ENCODE measurements at regions of chr10 and their contacts with region 1.

Region 1: DNA sequence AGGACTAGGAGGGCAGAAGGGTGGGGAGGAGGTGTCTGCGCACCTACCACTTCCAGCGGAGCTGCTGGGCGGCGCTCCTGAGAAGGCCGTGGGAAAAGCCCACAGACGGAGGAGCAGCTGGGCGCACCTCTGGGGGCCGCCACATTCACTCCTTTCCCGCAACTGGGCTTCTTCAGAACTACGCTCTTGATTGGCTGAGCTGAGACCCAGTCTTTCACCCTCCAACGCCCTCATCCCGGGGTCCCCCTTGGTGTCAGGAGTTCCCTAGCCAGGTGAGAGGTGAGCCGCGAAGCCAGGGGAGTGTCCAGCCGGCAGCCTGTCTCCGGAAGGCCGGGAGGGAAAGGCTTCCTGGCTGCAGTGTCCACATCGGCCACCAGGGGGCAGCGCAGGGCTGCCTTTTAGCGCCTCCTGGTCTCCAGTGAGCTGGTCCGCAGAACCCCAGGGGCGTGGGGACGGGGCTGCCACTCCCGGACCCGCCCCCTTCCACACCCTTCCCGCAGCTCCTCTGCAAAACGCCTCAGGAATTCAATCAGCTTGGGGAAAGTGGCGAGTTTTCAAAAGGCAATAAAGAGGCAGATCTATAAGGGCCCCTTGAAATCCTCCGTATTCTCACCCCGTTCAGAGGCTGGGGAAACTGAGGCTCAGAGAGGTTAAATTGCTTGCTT is 98.8 kb downstream of the CHST15 start:
- DNase-seq: peak; percentile 89 to 97 (median 93)
- H3K4me3 ChIP-seq: no peak overlapping the region
- H3K27ac ChIP-seq: no peak overlapping the region
- H3K4me1 ChIP-seq: peaks cover 6% of the 10 kb centered on the region
- H3K27me3 ChIP-seq: no peaks in the 10 kb centered on the region
- CTCF ChIP-seq: peak; percentile 99 to 100 (median 99)
- EP300 ChIP-seq: no peak
- POLR2A ChIP-seq: no peak

Region 2: GRCh38 chr10:123848564-123849457 is 145.7 kb before region 1 on chr10:
- intact Hi-C with region 1: no loop called
- DNase-seq: no peak
- H3K4me3 ChIP-seq: no peak overlapping the region
- H3K27ac ChIP-seq: no peak overlapping the region
- H3K4me1 ChIP-seq: no peaks in the 10 kb centered on the region
- H3K27me3 ChIP-seq: no peaks in the 10 kb centered on the region
- CTCF ChIP-seq: no peak
- EP300 ChIP-seq: no peak
- POLR2A ChIP-seq: no peak

Region 3: DNA sequence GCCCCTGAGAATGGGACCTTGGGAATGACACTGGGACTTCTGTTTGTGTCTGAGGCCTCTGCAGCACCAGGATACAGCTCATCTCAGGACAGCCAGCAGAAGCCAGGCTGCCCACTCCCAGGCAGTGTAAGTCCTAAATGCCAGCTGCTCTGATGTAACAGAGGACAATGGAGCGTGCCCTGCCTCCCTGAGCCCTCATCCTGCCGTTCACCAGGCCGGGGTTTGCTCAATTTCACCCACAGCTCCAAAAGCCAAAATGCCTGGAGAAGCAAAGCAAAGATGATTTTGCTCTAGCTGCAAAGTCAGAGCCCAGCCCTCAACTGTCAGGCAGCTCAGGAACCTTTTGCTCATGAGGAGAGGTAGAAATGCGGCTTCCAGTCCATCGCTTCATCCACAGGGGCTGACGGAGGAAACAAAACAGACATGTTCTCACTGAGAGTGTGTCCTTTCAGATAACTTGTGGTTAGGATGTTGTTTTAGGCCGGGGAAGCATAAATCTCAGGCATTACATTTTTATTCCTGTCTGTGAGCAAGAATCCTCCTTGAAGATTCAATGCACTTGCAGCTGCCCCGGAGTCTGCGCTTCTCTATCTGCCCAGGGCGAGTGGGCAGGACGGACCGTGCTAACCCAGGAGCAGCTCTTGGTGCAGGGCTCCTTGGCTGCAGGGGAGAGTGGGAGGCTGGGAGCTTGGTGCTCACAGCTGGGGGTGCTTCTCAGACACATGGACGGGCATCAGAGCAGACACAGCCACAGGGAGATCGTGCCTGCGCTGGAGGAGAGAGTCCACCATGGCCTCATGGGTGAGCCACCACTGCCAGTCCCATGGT is 182.0 kb after region 1 on chr10:
- intact Hi-C with region 1: loop called in 1 of 4 experiments (anchors 10 kb)
- DNase-seq: peak in 1 of 5 donors; percentile 30
- H3K4me3 ChIP-seq: no peak overlapping the region
- H3K27ac ChIP-seq: no peak overlapping the region
- H3K4me1 ChIP-seq: peaks cover 3% of the 10 kb centered on the region
- H3K27me3 ChIP-seq: no peaks in the 10 kb centered on the region
- CTCF ChIP-seq: no peak
- EP300 ChIP-seq: no peak
- POLR2A ChIP-seq: no peak

Region 4: GRCh38 chr10:124267231-124267885 is 272.8 kb after region 1 on chr10:
- intact Hi-C with region 1: loop called in 1 of 4 experiments (anchors 10 kb)
- DNase-seq: no peak
- H3K4me3 ChIP-seq: no peak overlapping the region
- H3K27ac ChIP-seq: no peak overlapping the region
- H3K4me1 ChIP-seq: no peaks in the 10 kb centered on the region
- H3K27me3 ChIP-seq: no peaks in the 10 kb centered on the region
- CTCF ChIP-seq: no peak
- EP300 ChIP-seq: no peak
- POLR2A ChIP-seq: no peak

Measured in ovary (tissue), 10 donors.